Transverse colon (tissue), 4 donors: ENCODE measurements at regions of chr5 and their contacts with region 1.

Region 1: DNA sequence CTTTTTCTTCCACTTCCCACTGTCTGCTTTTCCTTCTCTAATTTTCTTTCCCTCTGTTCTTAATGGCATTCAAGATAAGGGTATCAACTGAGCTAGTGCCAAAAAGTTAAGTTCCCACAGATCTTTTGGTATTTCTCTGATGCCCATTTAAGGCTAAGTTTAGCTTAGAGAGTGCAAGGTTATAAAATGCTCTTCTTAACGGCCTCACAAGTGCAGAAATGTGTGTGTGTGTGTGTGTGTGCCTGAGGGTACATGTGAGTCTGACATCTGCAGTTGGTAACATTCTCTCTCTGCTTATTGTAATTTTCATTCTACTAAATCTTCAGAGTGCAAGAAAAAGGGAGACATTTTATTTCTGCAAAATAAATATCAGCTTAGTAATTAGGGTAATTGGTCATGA is 24.2 kb downstream of the FBN2 start:
- DNase-seq: no peak
- H3K4me3 ChIP-seq: no peak overlapping the region
- H3K27ac ChIP-seq: no peak overlapping the region
- H3K4me1 ChIP-seq: no peaks in the 10 kb centered on the region
- H3K27me3 ChIP-seq: no peaks in the 10 kb centered on the region
- CTCF ChIP-seq: no peak
- EP300 ChIP-seq: no peak
- POLR2A ChIP-seq: no peak

Region 2: DNA sequence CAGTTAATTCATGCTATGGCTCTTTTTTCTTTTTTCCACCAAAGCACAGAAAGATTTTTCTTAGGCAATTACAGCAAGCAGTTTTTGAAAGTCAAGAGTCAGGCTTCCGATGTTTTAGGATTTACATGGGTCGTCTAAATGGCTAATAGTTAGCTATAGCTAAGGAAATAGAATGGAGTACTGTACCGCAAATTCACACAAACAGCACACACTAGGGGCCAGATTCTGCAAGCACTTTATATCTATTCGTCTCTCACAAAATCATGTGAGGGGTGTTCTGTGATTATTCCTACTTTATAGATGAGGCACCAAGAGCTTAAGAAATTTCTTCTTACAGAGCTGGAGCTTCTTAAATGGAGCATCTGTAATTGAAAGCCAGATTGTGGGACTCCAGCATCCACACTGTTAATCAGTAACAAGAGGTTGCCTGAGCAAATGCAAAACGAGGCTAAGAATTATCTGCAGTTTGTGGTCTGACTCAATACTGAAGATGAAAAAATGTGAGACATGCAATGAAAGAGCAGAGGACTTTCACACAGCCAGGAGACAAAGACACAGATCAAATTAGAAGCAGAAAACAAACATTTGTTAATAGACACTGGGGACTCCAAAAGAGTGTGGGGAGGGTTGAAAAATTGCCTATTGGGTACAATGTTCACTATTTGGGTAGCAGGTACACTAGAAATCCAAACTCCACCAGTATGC is 927.6 kb before region 1 on chr5:
- in situ Hi-C with region 1: loop called in 1 of 4 experiments (anchors 25 kb)
- intact Hi-C with region 1: no loop called
- DNase-seq: no peak
- H3K4me3 ChIP-seq: no peak overlapping the region
- H3K27ac ChIP-seq: no peak overlapping the region
- H3K4me1 ChIP-seq: no peaks in the 10 kb centered on the region
- H3K27me3 ChIP-seq: no peaks in the 10 kb centered on the region
- CTCF ChIP-seq: no peak
- EP300 ChIP-seq: no peak
- POLR2A ChIP-seq: no peak

Region 3: DNA sequence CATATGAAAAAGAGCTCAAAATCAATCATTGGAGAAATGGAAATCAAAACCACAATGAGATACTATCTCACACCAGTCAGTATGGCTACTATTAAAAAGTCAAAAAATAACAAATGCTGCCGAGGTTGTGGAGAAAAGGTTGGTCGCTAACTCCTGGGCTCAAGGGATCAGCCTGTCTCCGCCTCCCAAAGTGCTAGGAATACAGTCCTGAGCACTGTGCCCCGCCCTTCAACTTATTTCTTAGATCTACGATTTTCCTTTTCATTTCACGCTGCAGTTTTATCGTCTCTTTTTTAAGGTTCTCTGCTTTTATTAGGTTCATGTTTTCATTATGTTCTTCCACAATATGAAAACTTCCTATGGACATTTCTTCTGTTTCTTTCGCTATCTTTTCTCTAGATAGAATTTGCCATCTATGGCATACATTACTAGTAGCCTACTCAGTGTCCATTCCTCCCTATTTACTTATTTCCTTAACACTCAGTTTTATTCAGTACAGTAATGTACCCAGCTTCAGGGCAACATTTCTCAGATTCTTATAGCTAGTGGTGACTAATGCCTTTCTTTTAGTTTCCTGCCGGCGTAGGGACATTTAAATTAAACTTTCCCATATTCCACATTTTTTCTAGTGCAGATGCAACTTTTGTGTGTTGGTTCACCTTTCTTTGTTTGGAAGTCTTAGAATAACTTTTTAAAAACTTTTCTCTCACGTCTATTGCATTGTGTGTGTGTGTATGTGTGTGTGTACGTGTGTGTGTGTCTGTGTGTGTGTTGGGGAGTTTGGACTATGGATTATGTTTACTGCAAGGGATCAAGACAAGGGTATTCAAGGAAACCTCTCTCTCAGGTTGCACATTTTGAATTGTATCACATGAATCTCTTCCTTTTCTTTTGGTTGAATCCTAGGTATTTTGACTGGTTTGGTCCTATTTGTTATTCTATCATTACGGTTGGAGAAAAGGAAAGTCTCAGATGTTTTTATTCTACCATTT is 45.8 kb after region 1 on chr5:
- in situ Hi-C with region 1: no loop called
- intact Hi-C with region 1: no loop called
- DNase-seq: no peak
- H3K4me3 ChIP-seq: no peak overlapping the region
- H3K27ac ChIP-seq: no peak overlapping the region
- H3K4me1 ChIP-seq: no peaks in the 10 kb centered on the region
- H3K27me3 ChIP-seq: no peaks in the 10 kb centered on the region
- CTCF ChIP-seq: no peak
- EP300 ChIP-seq: no peak
- POLR2A ChIP-seq: no peak